Caco-2 (cell line): ENCODE measurements at regions of chr13 and their contacts with region 1.

Region 1: DNA sequence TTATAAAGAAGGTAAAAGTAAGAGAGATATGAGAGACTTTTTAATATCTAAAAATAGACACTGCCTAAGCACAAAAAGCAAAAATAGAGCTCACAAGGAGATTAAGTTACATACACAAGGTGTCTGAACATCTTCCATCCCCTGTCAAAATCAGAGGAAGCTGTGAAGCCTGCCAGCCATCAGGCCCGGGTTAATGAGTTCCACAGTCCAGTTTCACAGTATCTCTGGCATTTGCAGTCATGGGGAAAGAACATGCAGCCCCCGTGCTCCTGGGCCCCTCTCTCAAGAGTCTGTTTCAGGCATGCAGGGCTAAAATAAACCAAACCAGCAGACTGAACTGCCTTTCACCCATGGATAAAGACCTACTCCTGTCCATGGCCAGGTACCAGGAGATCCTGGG is 79.2 kb downstream of the TBC1D4 start:
- DNase-seq: peak in 1 of 2 experiments; percentile 19
- H3K4me3 ChIP-seq: no peak overlapping the region
- H3K4me3 Mint-ChIP-seq: no peak overlapping the region
- H3K27ac Mint-ChIP-seq: no peak overlapping the region
- H3K4me1 ChIP-seq: peaks cover 77% of the 10 kb centered on the region
- H3K4me1 Mint-ChIP-seq: peaks cover 45% of the 10 kb centered on the region
- H3K27me3 ChIP-seq: no peaks in the 10 kb centered on the region
- H3K27me3 Mint-ChIP-seq: no peaks in the 10 kb centered on the region
- CTCF ChIP-seq: no peak

Region 2: GRCh38 chr13:75357576-75358289 is 45.1 kb before region 1 on chr13:
- CTCF ChIA-PET with region 1: no interaction called
- POLR2A ChIA-PET with region 1: no interaction called
- intact Hi-C with region 1: no loop called
- DNase-seq: peak; percentile 62 to 71
- H3K4me3 ChIP-seq: no peak overlapping the region
- H3K4me3 Mint-ChIP-seq: no peak overlapping the region
- H3K27ac Mint-ChIP-seq: peak overlapping the region; percentile 55
- H3K4me1 ChIP-seq: peaks cover 53% of the 10 kb centered on the region
- H3K4me1 Mint-ChIP-seq: peaks cover 50% of the 10 kb centered on the region
- H3K27me3 ChIP-seq: no peaks in the 10 kb centered on the region
- H3K27me3 Mint-ChIP-seq: no peaks in the 10 kb centered on the region
- CTCF ChIP-seq: peak; percentile 74 to 84

Region 3: DNA sequence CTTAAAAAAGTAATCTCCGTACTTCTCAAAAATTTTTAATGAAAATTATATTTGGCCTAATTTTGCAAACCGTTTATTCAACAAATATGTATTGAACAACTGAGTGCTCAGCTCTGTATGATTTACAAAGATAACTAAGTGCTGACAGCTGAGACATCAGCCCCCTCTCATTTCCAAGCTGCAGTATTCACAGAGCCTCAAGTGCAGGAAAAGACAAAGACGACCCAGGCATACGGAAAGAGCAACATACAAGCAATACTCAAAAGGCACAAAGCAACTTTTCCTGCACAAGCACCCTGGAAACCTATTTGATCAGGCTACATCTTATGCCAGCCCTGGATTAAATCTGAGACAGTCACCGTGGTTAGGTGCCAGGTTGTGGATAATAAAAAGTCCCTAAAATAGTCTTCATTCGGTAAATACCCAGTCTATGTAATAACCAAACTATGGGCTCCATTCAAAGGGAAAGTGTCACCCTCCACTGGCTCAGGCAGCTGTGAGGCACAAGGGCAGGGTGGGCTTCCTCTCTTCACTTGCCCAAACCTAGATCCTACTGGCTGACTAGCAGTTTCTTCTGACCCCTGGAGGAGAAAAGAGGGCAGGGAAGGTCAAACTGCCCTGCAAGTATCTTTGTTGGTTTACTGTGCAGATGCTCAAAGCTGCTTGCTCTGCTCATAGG is 13.7 kb after region 1 on chr13:
- CTCF ChIA-PET with region 1: no interaction called
- POLR2A ChIA-PET with region 1: interaction called, 4 read pairs
- intact Hi-C with region 1: loop called (anchors 2 kb)
- DNase-seq: no peak
- H3K4me3 ChIP-seq: no peak overlapping the region
- H3K4me3 Mint-ChIP-seq: no peak overlapping the region
- H3K27ac Mint-ChIP-seq: no peak overlapping the region
- H3K4me1 ChIP-seq: peaks cover 41% of the 10 kb centered on the region
- H3K4me1 Mint-ChIP-seq: peaks cover 26% of the 10 kb centered on the region
- H3K27me3 ChIP-seq: no peaks in the 10 kb centered on the region
- H3K27me3 Mint-ChIP-seq: no peaks in the 10 kb centered on the region
- CTCF ChIP-seq: no peak